ENCODE measurements at regions of chr2 and their contacts with region 1.

Region 1: GRCh38 chr2:221573430-221574230 is 1.5 kb upstream of the EPHA4 start:
- DNase-seq: peak; percentile 92
- H3K4me3 Mint-ChIP-seq: peak overlapping the region; percentile 99
- H3K27ac Mint-ChIP-seq: peak overlapping the region; percentile 71
- H3K4me1 Mint-ChIP-seq: peaks cover 23% of the 10 kb centered on the region
- H3K27me3 Mint-ChIP-seq: peaks cover 28% of the 10 kb centered on the region
- CTCF ChIP-seq: peak; percentile 96

Region 2: DNA sequence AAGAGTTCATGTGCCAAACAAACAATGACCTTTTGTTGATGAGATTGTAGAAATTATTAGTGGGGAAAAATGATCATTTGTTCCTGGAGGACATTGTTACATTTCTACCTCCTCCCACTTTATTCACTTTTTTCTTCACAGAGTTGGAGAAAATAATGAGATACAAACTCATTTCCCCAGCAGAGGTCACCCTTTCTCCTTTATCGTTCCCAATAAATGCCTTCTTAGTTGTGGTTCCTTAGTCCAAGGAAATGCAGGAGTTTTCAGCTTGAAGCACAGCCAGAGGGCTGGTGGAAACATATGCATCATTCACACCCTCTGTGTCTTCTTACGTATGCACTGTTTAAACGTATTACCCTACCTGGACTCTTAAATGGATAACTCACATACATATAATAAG is 1837.4 kb before region 1 on chr2:
- CTCF ChIA-PET with region 1: interaction called, 3 read pairs
- intact Hi-C with region 1: loop called (anchors 1 kb)
- DNase-seq: peak; percentile 54
- H3K4me3 Mint-ChIP-seq: no peak overlapping the region
- H3K27ac Mint-ChIP-seq: no peak overlapping the region
- H3K4me1 Mint-ChIP-seq: no peaks in the 10 kb centered on the region
- H3K27me3 Mint-ChIP-seq: no peaks in the 10 kb centered on the region
- CTCF ChIP-seq: peak; percentile 67

Region 3: DNA sequence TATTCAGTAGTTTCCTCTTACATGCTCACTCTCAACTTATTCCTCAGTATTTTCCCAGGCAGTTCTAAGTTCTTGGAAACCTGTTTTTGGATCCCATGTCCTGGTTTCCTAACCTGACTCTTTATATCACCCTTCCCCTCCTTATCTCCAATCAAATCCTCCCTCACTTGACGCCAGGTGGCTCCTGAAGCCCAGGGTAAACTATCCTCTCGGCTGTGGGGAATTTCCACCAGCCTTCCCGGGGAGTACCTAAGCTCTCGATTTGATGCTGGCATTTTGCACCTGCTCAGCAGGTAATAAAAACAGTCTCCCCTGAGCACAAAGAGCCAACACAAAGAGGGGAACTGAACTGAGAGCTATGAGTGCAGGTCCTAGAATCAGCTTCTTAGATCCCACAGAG is 1408.2 kb before region 1 on chr2:
- CTCF ChIA-PET with region 1: no interaction called
- intact Hi-C with region 1: loop called (anchors 1 kb)
- DNase-seq: peak; percentile 58
- H3K4me3 Mint-ChIP-seq: no peak overlapping the region
- H3K27ac Mint-ChIP-seq: no peak overlapping the region
- H3K4me1 Mint-ChIP-seq: peaks cover 8% of the 10 kb centered on the region
- H3K27me3 Mint-ChIP-seq: no peaks in the 10 kb centered on the region
- CTCF ChIP-seq: peak; percentile 36

Region 4: DNA sequence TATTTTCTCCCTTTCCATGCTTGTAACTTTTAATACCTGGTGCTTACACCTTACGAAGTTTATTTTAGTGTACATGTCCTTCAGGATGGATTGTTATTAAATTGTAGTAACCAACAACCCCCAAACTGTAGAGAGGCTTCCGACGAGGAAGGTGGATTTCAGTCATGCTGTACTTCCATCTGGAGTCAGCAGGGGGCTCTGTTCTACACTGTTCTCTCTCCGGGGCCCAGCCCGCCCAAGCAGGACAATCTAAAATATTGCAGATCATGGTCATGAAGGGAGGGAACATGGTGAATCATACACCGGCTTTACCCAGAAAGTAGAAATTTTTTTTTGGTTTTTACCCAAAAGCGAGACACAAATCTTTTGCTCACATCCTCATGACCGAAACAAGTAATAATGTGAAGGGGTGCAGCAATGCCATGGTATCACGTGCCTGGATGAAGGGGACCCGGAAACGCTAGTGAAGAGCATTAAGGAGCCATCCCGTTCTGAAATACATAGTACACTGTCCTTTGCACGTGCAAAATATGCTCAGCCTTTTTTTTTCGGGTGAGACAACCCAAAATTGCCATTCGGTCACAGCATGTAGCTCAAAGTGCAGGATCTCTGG is 886.3 kb before region 1 on chr2:
- CTCF ChIA-PET with region 1: no interaction called
- intact Hi-C with region 1: loop called (anchors 1 kb)
- DNase-seq: peak; percentile 75
- H3K4me3 Mint-ChIP-seq: no peak overlapping the region
- H3K27ac Mint-ChIP-seq: no peak overlapping the region
- H3K4me1 Mint-ChIP-seq: peaks cover 6% of the 10 kb centered on the region
- H3K27me3 Mint-ChIP-seq: no peaks in the 10 kb centered on the region
- CTCF ChIP-seq: peak; percentile 79

Region 5: DNA sequence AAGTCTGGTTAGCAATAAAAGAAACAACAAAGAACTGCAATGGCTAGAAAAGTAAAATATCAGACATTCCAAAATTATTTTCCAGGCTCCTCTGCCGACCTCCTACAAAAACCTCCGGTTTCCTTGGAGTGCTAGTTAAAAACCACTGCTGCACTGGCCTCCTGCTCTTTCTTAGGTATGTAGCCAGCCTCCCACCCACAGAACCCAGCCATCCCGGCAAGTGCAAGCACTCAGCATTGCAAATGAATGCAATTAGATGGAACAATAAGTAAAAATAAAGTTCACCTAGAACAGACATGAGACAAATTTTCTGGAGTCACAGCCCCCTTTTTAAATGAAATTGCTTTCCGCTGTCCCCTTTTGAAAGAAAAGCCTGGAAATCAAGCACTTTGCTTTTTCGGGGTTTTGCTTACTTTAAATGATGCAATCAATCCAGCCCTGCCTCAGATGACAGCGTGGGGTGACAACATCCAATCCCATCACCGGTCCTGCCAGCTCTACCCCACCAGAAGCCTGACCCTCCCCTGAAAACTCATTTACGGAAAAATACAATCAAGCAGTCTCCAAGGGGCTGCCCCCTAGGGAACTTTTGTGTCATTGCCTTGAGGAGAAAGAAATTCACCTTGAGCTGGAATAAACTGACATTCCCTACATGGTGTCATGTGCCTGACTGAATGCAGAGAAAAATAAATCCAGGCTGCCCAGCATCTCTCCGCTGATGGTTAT is 201.3 kb before region 1 on chr2:
- CTCF ChIA-PET with region 1: no interaction called
- intact Hi-C with region 1: loop called (anchors 10 kb)
- DNase-seq: no peak
- H3K4me3 Mint-ChIP-seq: no peak overlapping the region
- H3K27ac Mint-ChIP-seq: no peak overlapping the region
- H3K4me1 Mint-ChIP-seq: no peaks in the 10 kb centered on the region
- H3K27me3 Mint-ChIP-seq: peaks cover 14% of the 10 kb centered on the region
- CTCF ChIP-seq: no peak

Region 6: GRCh38 chr2:221429741-221430491 is 143.7 kb before region 1 on chr2:
- CTCF ChIA-PET with region 1: no interaction called
- intact Hi-C with region 1: loop called (anchors 5 kb)
- DNase-seq: no peak
- H3K4me3 Mint-ChIP-seq: no peak overlapping the region
- H3K27ac Mint-ChIP-seq: no peak overlapping the region
- H3K4me1 Mint-ChIP-seq: peaks cover 21% of the 10 kb centered on the region
- H3K27me3 Mint-ChIP-seq: no peaks in the 10 kb centered on the region
- CTCF ChIP-seq: no peak

Region 7: GRCh38 chr2:221616561-221616960 is 42.9 kb after region 1 on chr2:
- CTCF ChIA-PET with region 1: no interaction called
- intact Hi-C with region 1: no loop called
- DNase-seq: no peak
- H3K4me3 Mint-ChIP-seq: no peak overlapping the region
- H3K27ac Mint-ChIP-seq: no peak overlapping the region
- H3K4me1 Mint-ChIP-seq: no peaks in the 10 kb centered on the region
- H3K27me3 Mint-ChIP-seq: no peaks in the 10 kb centered on the region
- CTCF ChIP-seq: no peak

Region 8: DNA sequence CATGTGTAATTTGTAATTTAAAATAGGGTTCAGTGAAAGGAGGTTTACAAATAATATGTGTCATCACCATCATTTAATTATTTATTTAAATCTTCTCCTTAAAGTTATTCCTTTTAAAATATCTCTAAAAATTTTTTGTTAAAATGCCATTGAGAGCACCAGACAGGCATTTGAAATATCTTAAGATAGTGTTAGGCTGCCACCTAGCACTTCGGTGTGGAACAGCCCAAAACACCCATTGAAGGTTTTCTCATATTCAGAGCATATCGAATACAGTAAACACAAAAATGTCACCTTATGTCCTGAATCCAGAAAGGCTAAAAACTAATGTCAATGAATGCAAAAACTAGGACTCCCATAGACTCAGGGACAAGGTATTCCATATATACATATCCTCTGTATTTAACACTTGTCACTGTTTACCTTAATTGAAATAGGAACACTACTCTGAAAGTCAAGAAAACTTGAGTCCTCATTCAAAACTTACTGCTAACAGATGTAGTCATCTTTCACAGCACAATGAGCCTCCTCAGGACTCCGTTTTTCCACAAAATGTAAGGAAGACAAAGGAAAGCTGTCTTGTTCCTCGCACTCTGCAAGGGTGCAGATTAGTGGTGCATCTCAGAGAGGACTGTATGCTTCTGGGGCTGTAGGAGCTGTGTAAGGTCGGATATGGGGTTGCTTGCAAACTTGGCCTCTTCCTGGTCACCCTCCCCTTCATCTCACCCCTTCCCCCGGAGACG is 395.6 kb after region 1 on chr2:
- CTCF ChIA-PET with region 1: no interaction called
- intact Hi-C with region 1: loop called (anchors 5 kb)
- DNase-seq: peak; percentile 38
- H3K4me3 Mint-ChIP-seq: no peak overlapping the region
- H3K27ac Mint-ChIP-seq: no peak overlapping the region
- H3K4me1 Mint-ChIP-seq: no peaks in the 10 kb centered on the region
- H3K27me3 Mint-ChIP-seq: peaks cover 9% of the 10 kb centered on the region
- CTCF ChIP-seq: peak; percentile 65

Measured in Calu3 (cell line).